ENCODE measurements at regions of chr11 and their contacts with region 1.

Region 1: GRCh38 chr11:63635762-63636465 is 21.7 kb upstream of the PLAAT3 start:
- DNase-seq: peak; percentile 20
- ATAC-seq: peak; percentile 82
- H3K4me3 ChIP-seq: no peak overlapping the region
- H3K27ac ChIP-seq: no peak overlapping the region
- H3K4me1 ChIP-seq: peaks cover 8% of the 10 kb centered on the region
- H3K27me3 ChIP-seq: no peaks in the 10 kb centered on the region
- CTCF ChIP-seq: peak; percentile 78 to 92 (median 79)
- EP300 ChIP-seq: no peak
- POLR2A ChIP-seq: no peak
- RAD21 ChIP-seq: peak; percentile 98

Region 2: GRCh38 chr11:63032457-63032856 is 603.5 kb before region 1 on chr11:
- CTCF ChIA-PET with region 1: interaction called, 3 read pairs
- POLR2A ChIA-PET with region 1: no interaction called
- RAD21 ChIA-PET with region 1: no interaction called
- SMC1A ChIA-PET with region 1: interaction called, 3 read pairs
- in situ Hi-C with region 1: loop called (anchors 10 kb)
- intact Hi-C with region 1: loop called (anchors 5 kb)
- DNase-seq: no peak
- ATAC-seq: no peak
- H3K4me3 ChIP-seq: no peak overlapping the region
- H3K27ac ChIP-seq: no peak overlapping the region
- H3K4me1 ChIP-seq: no peaks in the 10 kb centered on the region
- H3K27me3 ChIP-seq: no peaks in the 10 kb centered on the region
- CTCF ChIP-seq: no peak
- EP300 ChIP-seq: no peak
- POLR2A ChIP-seq: no peak
- RAD21 ChIP-seq: no peak

Region 3: DNA sequence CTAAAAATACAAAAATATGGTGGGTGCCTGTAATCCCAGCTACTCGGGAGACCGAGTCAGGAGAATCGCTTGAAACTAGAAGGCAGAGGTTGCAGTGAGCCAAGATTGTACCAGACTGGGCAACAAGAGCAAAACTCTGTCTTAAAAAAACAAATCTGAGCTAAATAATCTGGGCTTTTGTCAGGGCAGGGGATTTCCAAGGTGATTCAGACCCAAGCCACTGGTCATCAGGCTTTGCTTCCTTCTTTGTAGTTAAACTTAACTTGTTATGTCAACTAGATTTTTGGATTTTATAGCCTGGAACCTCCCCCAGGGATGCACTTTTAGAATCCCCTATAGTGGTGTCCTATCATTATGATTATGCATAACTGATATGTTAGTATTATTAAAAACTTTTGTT is 593.3 kb before region 1 on chr11:
- CTCF ChIA-PET with region 1: no interaction called
- POLR2A ChIA-PET with region 1: no interaction called
- RAD21 ChIA-PET with region 1: no interaction called
- SMC1A ChIA-PET with region 1: no interaction called
- in situ Hi-C with region 1: loop called (anchors 10 kb)
- intact Hi-C with region 1: loop called (anchors 5 kb)
- DNase-seq: no peak
- ATAC-seq: no peak
- H3K4me3 ChIP-seq: no peak overlapping the region
- H3K27ac ChIP-seq: no peak overlapping the region
- H3K4me1 ChIP-seq: no peaks in the 10 kb centered on the region
- H3K27me3 ChIP-seq: no peaks in the 10 kb centered on the region
- CTCF ChIP-seq: no peak
- EP300 ChIP-seq: no peak
- POLR2A ChIP-seq: no peak
- RAD21 ChIP-seq: no peak

Region 4: DNA sequence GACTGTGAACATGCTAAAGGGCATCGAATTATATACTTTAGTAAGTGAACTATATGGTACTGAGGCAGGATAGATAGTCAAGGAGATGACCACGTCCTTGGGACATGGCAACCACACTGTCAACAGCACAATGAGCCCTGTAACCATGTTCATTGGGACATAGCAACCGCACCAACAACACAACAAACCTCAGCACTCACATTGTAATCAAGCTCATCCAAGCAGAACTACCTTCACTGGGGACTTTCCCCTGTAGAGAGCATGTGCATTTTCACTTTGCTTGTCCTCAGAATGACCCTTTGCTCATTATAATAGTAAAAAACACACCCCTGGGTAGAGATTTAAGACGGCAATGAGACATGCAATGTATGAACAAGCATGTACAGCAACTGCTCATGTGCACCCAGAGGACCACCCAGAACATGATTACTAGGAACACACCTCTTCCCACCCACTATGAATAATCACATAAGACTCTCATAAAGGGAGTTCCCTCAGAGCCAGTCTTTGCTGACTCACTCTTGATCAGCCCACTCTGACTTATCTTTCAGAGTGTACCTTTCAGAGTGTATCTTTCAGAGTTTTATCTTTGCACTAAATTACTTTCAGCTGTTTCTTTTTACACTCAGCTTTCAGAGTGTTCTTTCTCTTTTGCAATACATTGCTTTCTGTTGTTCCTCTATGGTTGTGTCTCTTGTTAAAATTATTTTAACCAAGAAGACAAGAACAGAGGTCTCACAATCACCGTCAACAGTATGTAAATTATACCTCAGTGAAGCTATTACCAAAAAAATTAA is 68.7 kb before region 1 on chr11:
- CTCF ChIA-PET with region 1: interaction called, 4 read pairs
- POLR2A ChIA-PET with region 1: no interaction called
- RAD21 ChIA-PET with region 1: interaction called, 4 read pairs
- SMC1A ChIA-PET with region 1: no interaction called
- in situ Hi-C with region 1: no loop called
- intact Hi-C with region 1: loop called (anchors 1 kb)
- DNase-seq: peak; percentile 95
- ATAC-seq: peak; percentile 87
- H3K4me3 ChIP-seq: peak overlapping the region; percentile 28; the same call in 1 of the 2 replicates
- H3K27ac ChIP-seq: peak overlapping the region; percentile 72
- H3K4me1 ChIP-seq: peaks cover 56% of the 10 kb centered on the region
- H3K27me3 ChIP-seq: no peaks in the 10 kb centered on the region
- CTCF ChIP-seq: no peak
- EP300 ChIP-seq: peak; percentile 92 to 99
- POLR2A ChIP-seq: no peak
- RAD21 ChIP-seq: no peak

Region 5: DNA sequence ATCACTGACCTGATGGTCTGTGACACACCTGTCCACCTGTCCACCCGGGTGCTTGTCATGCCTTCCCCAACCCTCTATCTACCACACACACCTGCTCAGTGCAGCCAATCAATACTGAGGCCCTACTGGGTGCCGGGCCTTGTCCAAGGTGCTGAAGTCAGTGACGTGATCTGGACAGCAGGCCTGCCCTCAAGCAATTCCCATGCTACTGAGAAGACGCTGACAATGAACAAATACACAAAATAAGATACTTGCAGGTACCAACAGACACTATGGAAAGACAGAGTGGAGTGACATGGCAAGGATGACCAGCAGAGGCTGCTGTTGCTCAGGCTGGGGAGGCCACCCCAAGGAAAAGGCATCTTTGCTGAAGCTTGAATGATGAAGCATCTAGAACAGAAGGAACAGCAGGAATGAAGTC is 42.9 kb before region 1 on chr11:
- CTCF ChIA-PET with region 1: interaction called, 22 read pairs
- POLR2A ChIA-PET with region 1: interaction called, 3 read pairs
- RAD21 ChIA-PET with region 1: interaction called, 4 read pairs
- SMC1A ChIA-PET with region 1: interaction called, 5 read pairs
- in situ Hi-C with region 1: no loop called
- intact Hi-C with region 1: loop called (anchors 2 kb)
- DNase-seq: no peak
- ATAC-seq: peak; percentile 69
- H3K4me3 ChIP-seq: no peak overlapping the region
- H3K27ac ChIP-seq: no peak overlapping the region
- H3K4me1 ChIP-seq: no peaks in the 10 kb centered on the region
- H3K27me3 ChIP-seq: no peaks in the 10 kb centered on the region
- CTCF ChIP-seq: peak; percentile 66 to 79 (median 75)
- EP300 ChIP-seq: no peak
- POLR2A ChIP-seq: no peak
- RAD21 ChIP-seq: peak; percentile 70

Region 6: DNA sequence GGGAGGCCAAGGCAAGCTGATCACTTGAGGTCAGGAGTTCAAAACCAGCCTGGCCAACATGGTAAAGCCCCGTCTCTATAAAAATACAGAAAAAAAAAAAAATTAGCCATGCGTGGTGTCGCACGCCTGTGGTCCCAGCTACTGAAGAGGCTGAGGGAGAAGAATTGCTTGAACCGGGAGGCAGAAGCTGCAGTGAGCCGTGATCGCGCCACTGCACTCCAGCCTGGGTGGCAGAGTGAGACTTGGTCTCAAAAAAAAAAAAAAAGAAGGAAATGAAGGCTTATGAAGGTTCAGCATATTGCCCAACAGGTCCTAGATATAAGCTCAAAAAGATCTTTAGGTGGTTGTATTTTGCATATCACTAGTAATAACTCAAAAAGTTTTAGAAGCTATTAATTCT is 25.1 kb after region 1 on chr11:
- CTCF ChIA-PET with region 1: interaction called, 11 read pairs
- POLR2A ChIA-PET with region 1: no interaction called
- RAD21 ChIA-PET with region 1: no interaction called
- SMC1A ChIA-PET with region 1: interaction called, 4 read pairs
- in situ Hi-C with region 1: no loop called
- intact Hi-C with region 1: no loop called
- DNase-seq: no peak
- ATAC-seq: peak; percentile 57
- H3K4me3 ChIP-seq: no peak overlapping the region
- H3K27ac ChIP-seq: peak overlapping the region; percentile 14; the same call in 1 of the 2 replicates
- H3K4me1 ChIP-seq: peaks cover 5% of the 10 kb centered on the region
- H3K27me3 ChIP-seq: no peaks in the 10 kb centered on the region
- CTCF ChIP-seq: no peak
- EP300 ChIP-seq: no peak
- POLR2A ChIP-seq: no peak
- RAD21 ChIP-seq: no peak